Activated naive CD4-positive, alpha-beta T cell treated with anti-CD3 and anti-CD28 coated beads, Interleukin-2, amount 10 ng/mL, durations not matched to agents 7 days and 5 days (primary cell): ENCODE measurements at regions of chr2 and their contacts with region 1.

Region 1: DNA sequence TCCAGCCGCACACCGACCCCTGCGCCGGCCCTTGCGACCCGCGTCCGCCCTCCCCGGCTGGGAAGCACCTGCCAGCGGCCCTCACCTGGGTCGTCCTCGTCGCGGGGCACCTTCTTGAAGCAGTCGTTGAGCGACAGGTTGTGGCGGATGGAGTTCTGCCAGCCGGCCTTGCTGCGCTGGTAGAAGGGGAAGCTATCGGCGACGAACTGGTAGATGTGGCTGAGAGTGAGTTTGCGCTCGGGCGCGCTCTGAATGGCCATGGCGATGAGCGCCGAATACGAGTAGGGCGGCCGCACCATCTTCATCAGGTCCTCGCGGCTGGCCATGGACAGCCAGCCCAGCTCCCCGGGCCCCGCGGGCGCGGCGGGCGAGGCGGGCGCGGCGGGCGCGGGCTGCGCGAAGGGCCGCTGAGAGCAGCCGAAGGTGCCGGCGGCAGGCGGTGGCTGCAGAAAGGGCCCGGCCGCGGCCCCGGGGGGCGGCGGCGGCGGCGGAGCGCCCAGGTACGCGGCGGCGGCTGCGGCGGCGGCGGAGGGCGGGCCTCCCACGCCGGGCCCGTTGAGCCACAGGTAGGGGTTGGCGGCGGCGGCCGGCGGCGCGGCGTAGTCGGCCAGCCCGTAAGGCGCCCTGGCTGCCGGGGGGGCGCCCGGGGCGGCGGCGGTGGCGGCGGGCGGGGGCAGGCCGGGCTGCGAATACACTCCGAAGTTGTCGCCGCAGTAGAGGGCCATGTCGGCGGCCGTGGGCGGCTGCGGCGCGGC is 505 bp downstream of the FOXI3 start:
- DNase-seq: peak; percentile 34
- H3K4me3 Mint-ChIP-seq: peak overlapping the region; percentile 56
- H3K27ac Mint-ChIP-seq: no peak overlapping the region
- H3K4me1 Mint-ChIP-seq: peaks cover 9% of the 10 kb centered on the region
- H3K27me3 Mint-ChIP-seq: peaks cover 65% of the 10 kb centered on the region

Region 2: GRCh38 chr2:88187038-88187676 is 264.8 kb before region 1 on chr2:
- CTCF ChIA-PET with region 1: interaction called, 10 read pairs
- DNase-seq: peak; percentile 62
- H3K4me3 Mint-ChIP-seq: no peak overlapping the region
- H3K27ac Mint-ChIP-seq: no peak overlapping the region
- H3K4me1 Mint-ChIP-seq: peaks cover 19% of the 10 kb centered on the region
- H3K27me3 Mint-ChIP-seq: peaks cover 4% of the 10 kb centered on the region

Region 3: DNA sequence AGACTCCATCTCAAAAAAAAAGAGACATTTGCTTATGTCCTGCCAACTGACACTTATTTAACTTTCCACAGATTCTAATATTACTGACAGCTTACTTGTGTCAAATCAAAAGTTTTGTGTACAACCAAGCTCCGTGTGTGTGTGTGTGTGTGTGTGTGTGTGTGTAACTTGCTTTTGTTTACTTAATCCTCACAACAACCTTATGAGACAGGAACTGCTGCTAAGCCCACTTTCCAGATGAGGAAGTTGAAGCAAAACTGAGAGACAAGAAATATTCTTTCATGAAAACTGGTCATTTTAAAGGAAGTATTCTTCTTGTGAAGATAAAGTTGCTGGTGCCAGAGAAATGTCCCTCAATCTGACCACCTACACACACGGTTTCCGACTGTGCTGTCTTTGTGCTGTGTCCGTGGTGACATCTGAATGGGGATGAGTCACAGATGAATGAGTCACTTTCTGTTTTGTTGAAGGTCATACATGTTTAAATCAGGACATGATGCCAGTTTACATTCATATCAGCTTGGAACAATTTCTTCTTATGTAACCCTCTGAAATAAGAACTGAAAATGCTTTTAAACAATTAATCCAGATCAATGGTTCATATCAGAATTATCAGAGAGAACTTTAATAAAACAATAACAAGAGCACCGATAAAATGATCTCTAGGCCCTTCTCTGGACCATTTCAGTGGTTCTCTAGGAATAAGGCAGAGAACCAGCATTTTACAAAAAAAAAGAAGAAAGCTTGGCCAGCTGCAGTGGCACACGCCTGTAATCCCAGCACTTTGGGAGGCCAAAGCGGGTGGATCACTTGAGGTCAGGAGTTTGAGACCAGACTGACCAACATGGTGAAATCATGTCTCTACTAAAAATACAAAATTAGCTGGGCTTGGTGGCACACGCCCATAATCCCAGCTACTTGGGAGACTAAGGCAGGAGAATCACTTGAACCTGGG is 186.4 kb before region 1 on chr2:
- CTCF ChIA-PET with region 1: no interaction called
- DNase-seq: no peak
- H3K4me3 Mint-ChIP-seq: no peak overlapping the region
- H3K27ac Mint-ChIP-seq: no peak overlapping the region
- H3K4me1 Mint-ChIP-seq: no peaks in the 10 kb centered on the region
- H3K27me3 Mint-ChIP-seq: peaks cover 27% of the 10 kb centered on the region